ENCODE measurements at regions of chr18 and their contacts with region 1.

Region 1: DNA sequence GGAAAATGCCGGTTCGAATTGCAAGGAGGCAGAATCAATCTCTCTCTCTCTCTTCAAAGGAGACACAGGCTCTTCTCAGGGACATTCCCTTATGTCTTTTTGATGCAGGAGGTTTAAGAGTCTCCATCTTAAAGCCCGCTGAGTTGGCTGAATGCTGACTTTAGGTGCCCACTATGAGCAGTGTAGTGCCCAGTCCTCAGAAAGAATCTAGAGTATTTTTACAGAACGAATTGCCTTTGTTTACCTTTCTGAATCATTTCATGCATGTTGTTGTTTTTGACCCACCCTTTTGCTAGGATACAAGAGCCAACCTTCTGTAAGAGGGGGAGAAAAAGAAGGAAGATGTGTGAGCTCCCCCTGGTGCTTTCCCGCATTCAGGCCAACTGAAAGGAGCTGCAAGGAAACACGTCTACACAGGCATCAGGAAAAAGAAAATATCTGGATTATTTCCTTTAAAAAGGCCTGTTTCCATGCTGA is 193.5 kb upstream of the TCF4 start:
- DNase-seq: peak in 4 of 5 donors; percentile 33 to 58 (median 48)
- ATAC-seq: peak in 3 of 4 donors; percentile 65 to 75 (median 75)
- H3K4me3 ChIP-seq: no peak overlapping the region
- H3K27ac ChIP-seq: peak overlapping the region; percentile 48 to 95 (median 88)
- H3K4me1 ChIP-seq: peaks cover 0 to 30% (median 20%) of the 10 kb centered on the region in 12 donors
- H3K27me3 ChIP-seq: peaks cover 0 to 3% (median 0%) of the 10 kb centered on the region in 9 donors
- CTCF ChIP-seq: peak; percentile 31 to 75 (median 68)
- POLR2A ChIP-seq: no peak

Region 2: GRCh38 chr18:55096261-55096951 is 685.1 kb before region 1 on chr18:
- intact Hi-C with region 1: loop called in 4 of 10 experiments (anchors 5 to 10 kb)
- DNase-seq: peak in 4 of 5 donors; percentile 38 to 44 (median 41)
- ATAC-seq: peak; percentile 77 to 87 (median 80)
- H3K4me3 ChIP-seq: no peak overlapping the region
- H3K27ac ChIP-seq: no peak overlapping the region
- H3K4me1 ChIP-seq: peaks cover 0 to 15% (median 5%) of the 10 kb centered on the region in 12 donors
- H3K27me3 ChIP-seq: no peaks in the 10 kb centered on the region
- CTCF ChIP-seq: peak in 11 of 12 donors; percentile 23 to 59 (median 36)
- POLR2A ChIP-seq: no peak

Region 3: GRCh38 chr18:55243857-55244256 is 537.7 kb before region 1 on chr18:
- intact Hi-C with region 1: loop called in 3 of 10 experiments (anchors 5 to 10 kb)
- DNase-seq: peak in 4 of 5 donors; percentile 72 to 83 (median 78)
- ATAC-seq: peak; percentile 76 to 89 (median 86)
- H3K4me3 ChIP-seq: no peak overlapping the region
- H3K27ac ChIP-seq: peak overlapping the region; percentile 49 to 84 (median 77)
- H3K4me1 ChIP-seq: peaks cover 12 to 98% (median 74%) of the 10 kb centered on the region in 12 donors
- H3K27me3 ChIP-seq: no peaks in the 10 kb centered on the region
- CTCF ChIP-seq: no peak
- POLR2A ChIP-seq: no peak

Region 4: DNA sequence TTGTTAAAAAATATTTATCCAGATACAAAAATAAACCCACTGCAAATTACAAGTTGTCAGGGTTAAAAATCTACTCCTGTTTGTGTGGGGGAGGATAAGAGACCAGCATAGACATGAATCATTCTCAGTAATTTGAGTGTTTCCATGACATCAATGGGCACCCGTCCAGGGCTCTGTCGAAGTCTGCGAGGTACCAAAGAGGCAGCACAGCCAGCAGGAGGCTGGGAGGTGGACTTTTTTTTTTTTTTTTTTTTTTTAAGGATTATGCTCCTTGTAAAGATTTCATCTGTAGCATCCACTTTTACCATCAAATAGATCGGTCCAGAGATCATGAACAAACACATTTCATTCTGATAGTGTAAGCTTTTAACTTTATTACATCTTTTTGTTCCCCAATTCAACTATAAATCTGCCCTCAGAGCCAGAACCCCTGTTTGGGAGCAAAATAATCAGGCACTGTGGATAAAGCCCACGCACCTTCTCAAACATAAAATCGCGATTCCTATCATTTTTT is 375.6 kb before region 1 on chr18:
- intact Hi-C with region 1: loop called in 2 of 10 experiments (anchors 5 to 10 kb)
- DNase-seq: peak; percentile 87 to 93 (median 92)
- ATAC-seq: peak; percentile 83 to 91 (median 88)
- H3K4me3 ChIP-seq: peak overlapping the region in 1 of 12 donors; percentile 3
- H3K27ac ChIP-seq: peak overlapping the region; percentile 50 to 86 (median 80)
- H3K4me1 ChIP-seq: peaks cover 0 to 55% (median 20%) of the 10 kb centered on the region in 12 donors
- H3K27me3 ChIP-seq: no peaks in the 10 kb centered on the region
- CTCF ChIP-seq: peak in 5 of 12 donors; percentile 5 to 35 (median 22)
- POLR2A ChIP-seq: no peak

Region 5: DNA sequence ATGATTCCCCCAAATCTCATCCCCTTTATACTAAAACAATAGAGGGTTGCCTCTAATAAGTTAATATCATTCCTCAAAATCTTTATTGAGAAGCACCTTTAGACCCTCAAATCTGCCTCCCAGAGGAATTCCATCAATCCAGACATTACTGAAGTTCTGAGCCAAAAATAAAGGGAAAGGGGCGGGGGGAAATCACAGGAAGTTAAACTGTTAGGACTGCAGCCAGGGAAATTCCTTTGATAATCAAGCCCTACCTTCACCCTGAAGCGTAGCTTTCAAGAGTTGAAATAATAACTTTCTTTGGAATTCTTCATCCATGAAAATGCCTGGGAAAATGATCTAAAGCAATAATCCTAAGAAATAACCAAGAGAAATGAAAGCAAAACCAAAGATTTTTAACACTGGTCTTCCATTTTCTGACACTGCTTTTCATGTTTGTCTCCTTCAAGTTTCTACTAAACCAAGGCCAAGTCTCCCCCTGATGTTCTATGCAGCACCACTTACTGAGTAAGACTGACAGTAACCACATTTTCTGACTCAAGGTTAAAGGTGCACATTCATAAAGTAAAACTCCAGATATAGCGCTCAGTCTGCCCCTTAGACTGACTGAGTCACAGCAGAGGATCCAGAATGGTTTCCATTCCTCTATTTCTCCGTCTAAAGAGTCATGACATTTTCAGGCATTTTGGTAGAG is 271.7 kb before region 1 on chr18:
- intact Hi-C with region 1: loop called in 2 of 10 experiments (anchors 5 kb)
- DNase-seq: peak in 2 of 5 donors; percentile 40 to 63
- ATAC-seq: peak in 2 of 4 donors; percentile 45 to 64
- H3K4me3 ChIP-seq: peak overlapping the region in 11 of 12 donors; percentile 1 to 50 (median 34)
- H3K27ac ChIP-seq: peak overlapping the region; percentile 52 to 94 (median 86)
- H3K4me1 ChIP-seq: peaks cover 0 to 55% (median 18%) of the 10 kb centered on the region in 12 donors
- H3K27me3 ChIP-seq: no peaks in the 10 kb centered on the region
- CTCF ChIP-seq: no peak
- POLR2A ChIP-seq: no peak

Region 6: GRCh38 chr18:55763298-55763697 is 18.2 kb before region 1 on chr18:
- intact Hi-C with region 1: no loop called
- DNase-seq: no peak
- ATAC-seq: no peak
- H3K4me3 ChIP-seq: no peak overlapping the region
- H3K27ac ChIP-seq: no peak overlapping the region
- H3K4me1 ChIP-seq: no peaks in the 10 kb centered on the region
- H3K27me3 ChIP-seq: no peaks in the 10 kb centered on the region
- CTCF ChIP-seq: no peak
- POLR2A ChIP-seq: no peak

Region 7: GRCh38 chr18:55861266-55861665 is 79.7 kb after region 1 on chr18:
- intact Hi-C with region 1: loop called in 1 of 10 experiments (anchors 5 kb)
- DNase-seq: no peak
- ATAC-seq: peak in 1 of 4 donors; percentile 24
- H3K4me3 ChIP-seq: no peak overlapping the region
- H3K27ac ChIP-seq: no peak overlapping the region
- H3K4me1 ChIP-seq: peaks cover 0 to 23% (median 6%) of the 10 kb centered on the region in 12 donors
- H3K27me3 ChIP-seq: no peaks in the 10 kb centered on the region
- CTCF ChIP-seq: peak in 9 of 12 donors; percentile 28 to 57 (median 41)
- POLR2A ChIP-seq: no peak

Region 8: DNA sequence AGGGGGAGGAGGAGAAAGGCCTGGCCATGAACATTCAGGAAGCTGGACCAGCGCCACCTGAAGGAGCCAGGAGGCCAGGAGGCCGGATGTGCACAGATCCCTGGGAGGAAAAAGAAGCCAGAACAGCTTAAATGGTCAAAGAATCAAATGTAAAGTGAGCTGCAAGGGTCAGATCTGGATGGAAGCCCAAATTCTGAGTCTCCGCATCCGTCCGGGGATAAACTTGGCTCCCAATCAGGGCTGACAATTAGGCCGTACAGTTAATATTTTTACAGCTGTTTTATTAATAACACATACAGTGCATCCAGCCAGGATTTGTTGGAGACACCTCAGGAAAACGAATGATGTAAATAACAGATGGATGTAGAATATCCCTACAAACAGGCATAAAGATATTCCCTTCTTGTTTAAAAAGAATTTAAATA is 301.6 kb after region 1 on chr18:
- intact Hi-C with region 1: loop called in 2 of 10 experiments (anchors 5 to 10 kb)
- DNase-seq: peak; percentile 66 to 89 (median 77)
- ATAC-seq: peak; percentile 73 to 91 (median 80)
- H3K4me3 ChIP-seq: no peak overlapping the region
- H3K27ac ChIP-seq: peak overlapping the region in 10 of 12 donors; percentile 16 to 81 (median 68)
- H3K4me1 ChIP-seq: peaks cover 0 to 35% (median 21%) of the 10 kb centered on the region in 12 donors
- H3K27me3 ChIP-seq: no peaks in the 10 kb centered on the region
- CTCF ChIP-seq: peak in 10 of 12 donors; percentile 7 to 58 (median 29)
- POLR2A ChIP-seq: no peak